K562 (cell line): ENCODE measurements at regions of chr2 and their contacts with region 1.

Region 1: GRCh38 chr2:138020432-138020831 is 56.2 kb downstream of the HNMT start:
- DNase-seq: peak in 1 of 4 experiments; percentile 46
- ATAC-seq: peak; percentile 77
- H3K4me3 ChIP-seq: no peak overlapping the region
- H3K27ac ChIP-seq: peak overlapping the region; percentile 4; the same call in 1 of the 3 replicates
- H3K4me1 ChIP-seq: peaks cover 10 to 30% of the 10 kb centered on the region in 2 experiments; a peak in 4 of 5 replicates
- H3K27me3 ChIP-seq: no peaks in the 10 kb centered on the region
- CTCF ChIP-seq: peak; percentile 27 to 42 (median 39); a peak in 5 of 6 replicates
- EP300 ChIP-seq: no peak
- POLR2A ChIP-seq: no peak
- RAD21 ChIP-seq: peak in 1 of 2 experiments; percentile 39; a peak in 2 of 4 replicates

Region 2: GRCh38 chr2:137872577-137872976 is 147.9 kb before region 1 on chr2:
- CTCF ChIA-PET with region 1: no interaction called
- POLR2A ChIA-PET with region 1: no interaction called
- in situ Hi-C with region 1: no loop called
- intact Hi-C with region 1: no loop called
- DNase-seq: no peak
- ATAC-seq: no peak
- H3K4me3 ChIP-seq: no peak overlapping the region
- H3K27ac ChIP-seq: no peak overlapping the region
- H3K4me1 ChIP-seq: no peaks in the 10 kb centered on the region
- H3K27me3 ChIP-seq: no peaks in the 10 kb centered on the region
- CTCF ChIP-seq: no peak
- EP300 ChIP-seq: no peak
- POLR2A ChIP-seq: no peak
- RAD21 ChIP-seq: no peak

Region 3: GRCh38 chr2:137947728-137948336 is 72.6 kb before region 1 on chr2:
- CTCF ChIA-PET with region 1: interaction called, 3 read pairs
- POLR2A ChIA-PET with region 1: no interaction called
- in situ Hi-C with region 1: no loop called
- intact Hi-C with region 1: loop called (anchors 1 kb)
- DNase-seq: peak; percentile 48 to 81 (median 58)
- ATAC-seq: peak; percentile 85
- H3K4me3 ChIP-seq: no peak overlapping the region
- H3K27ac ChIP-seq: no peak overlapping the region
- H3K4me1 ChIP-seq: peaks cover 4 to 19% of the 10 kb centered on the region in 2 experiments; a peak in 3 of 5 replicates
- H3K27me3 ChIP-seq: no peaks in the 10 kb centered on the region
- CTCF ChIP-seq: peak; percentile 67 to 85 (median 68)
- EP300 ChIP-seq: no peak
- POLR2A ChIP-seq: no peak
- RAD21 ChIP-seq: peak; percentile 93 to 97